BJ (cell line): ENCODE measurements at regions of chr3 and their contacts with region 1.

Region 1: GRCh38 chr3:51610708-51611107 is 60.3 kb upstream of the TEX264 start:
- DNase-seq: no peak
- H3K4me3 ChIP-seq: no peak overlapping the region
- H3K27me3 ChIP-seq: no peaks in the 10 kb centered on the region
- CTCF ChIP-seq: no peak

Region 2: GRCh38 chr3:51508255-51508654 is 102.5 kb before region 1 on chr3:
- CTCF ChIA-PET with region 1: no interaction called
- POLR2A ChIA-PET with region 1: no interaction called
- DNase-seq: no peak
- H3K4me3 ChIP-seq: no peak overlapping the region
- H3K27me3 ChIP-seq: no peaks in the 10 kb centered on the region
- CTCF ChIP-seq: no peak

Region 3: GRCh38 chr3:51568036-51568435 is 42.7 kb before region 1 on chr3:
- CTCF ChIA-PET with region 1: no interaction called
- POLR2A ChIA-PET with region 1: no interaction called
- DNase-seq: no peak
- H3K4me3 ChIP-seq: no peak overlapping the region
- H3K27me3 ChIP-seq: no peaks in the 10 kb centered on the region
- CTCF ChIP-seq: no peak

Region 4: DNA sequence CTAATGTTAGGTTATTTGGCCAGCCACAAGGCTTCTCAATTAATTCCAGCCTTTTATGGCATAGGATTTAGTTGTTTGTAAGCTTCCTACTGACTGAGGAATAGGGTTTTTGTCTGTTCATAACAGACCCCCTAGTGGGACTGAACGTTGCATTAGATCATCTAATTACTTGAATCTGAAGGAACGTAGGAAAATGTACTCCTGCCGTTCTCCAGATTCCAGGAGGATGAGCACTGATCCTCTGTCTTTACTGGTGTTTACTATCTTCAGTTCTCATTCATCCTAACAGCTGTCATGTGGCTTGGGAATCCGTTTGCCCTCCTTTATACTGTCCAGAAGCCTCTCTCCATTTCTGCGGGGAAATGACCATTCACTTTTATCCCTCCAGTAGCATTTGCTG is 19.5 kb before region 1 on chr3:
- CTCF ChIA-PET with region 1: no interaction called
- POLR2A ChIA-PET with region 1: interaction called, 20 read pairs
- DNase-seq: no peak
- H3K4me3 ChIP-seq: no peak overlapping the region
- H3K27me3 ChIP-seq: no peaks in the 10 kb centered on the region
- CTCF ChIP-seq: no peak

Region 5: DNA sequence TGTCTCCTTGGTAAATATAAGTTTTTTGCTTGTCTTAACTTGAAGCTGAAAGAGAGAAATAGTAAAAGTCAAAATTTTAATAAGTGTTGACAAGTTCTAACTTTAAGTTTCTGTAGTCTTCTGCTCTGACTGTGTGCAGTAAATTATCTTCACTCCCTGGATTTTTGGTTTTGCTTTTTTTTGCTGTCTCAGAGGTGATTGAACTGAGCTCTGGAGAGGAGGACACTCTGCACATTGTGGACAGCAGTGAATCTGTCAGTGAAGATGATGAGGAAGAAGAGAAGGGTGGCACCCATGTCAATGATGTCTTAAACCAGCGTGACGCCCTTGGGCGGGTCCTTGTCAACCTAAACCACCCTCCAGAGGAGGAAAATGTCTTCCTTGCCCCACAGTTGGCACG is 19.8 kb after region 1 on chr3:
- CTCF ChIA-PET with region 1: no interaction called
- POLR2A ChIA-PET with region 1: no interaction called
- DNase-seq: no peak
- H3K4me3 ChIP-seq: no peak overlapping the region
- H3K27me3 ChIP-seq: no peaks in the 10 kb centered on the region
- CTCF ChIP-seq: no peak